Activated CD8-positive, alpha-beta memory T cell treated with anti-CD3 and anti-CD28 coated beads, Interleukin-2, amount 10 ng/mL, durations not matched to agents 7 days and 5 days (primary cell): ENCODE measurements at regions of chr1 and their contacts with region 1.

Region 1: GRCh38 chr1:100459358-100460114 is 78.4 kb upstream of the GPR88 start:
- DNase-seq: peak; percentile 83
- ATAC-seq: peak; percentile 92
- H3K4me3 Mint-ChIP-seq: peak overlapping the region; percentile 37
- H3K27ac Mint-ChIP-seq: peak overlapping the region; percentile 69
- H3K4me1 Mint-ChIP-seq: peaks cover 57% of the 10 kb centered on the region
- H3K27me3 Mint-ChIP-seq: no peaks in the 10 kb centered on the region

Region 2: DNA sequence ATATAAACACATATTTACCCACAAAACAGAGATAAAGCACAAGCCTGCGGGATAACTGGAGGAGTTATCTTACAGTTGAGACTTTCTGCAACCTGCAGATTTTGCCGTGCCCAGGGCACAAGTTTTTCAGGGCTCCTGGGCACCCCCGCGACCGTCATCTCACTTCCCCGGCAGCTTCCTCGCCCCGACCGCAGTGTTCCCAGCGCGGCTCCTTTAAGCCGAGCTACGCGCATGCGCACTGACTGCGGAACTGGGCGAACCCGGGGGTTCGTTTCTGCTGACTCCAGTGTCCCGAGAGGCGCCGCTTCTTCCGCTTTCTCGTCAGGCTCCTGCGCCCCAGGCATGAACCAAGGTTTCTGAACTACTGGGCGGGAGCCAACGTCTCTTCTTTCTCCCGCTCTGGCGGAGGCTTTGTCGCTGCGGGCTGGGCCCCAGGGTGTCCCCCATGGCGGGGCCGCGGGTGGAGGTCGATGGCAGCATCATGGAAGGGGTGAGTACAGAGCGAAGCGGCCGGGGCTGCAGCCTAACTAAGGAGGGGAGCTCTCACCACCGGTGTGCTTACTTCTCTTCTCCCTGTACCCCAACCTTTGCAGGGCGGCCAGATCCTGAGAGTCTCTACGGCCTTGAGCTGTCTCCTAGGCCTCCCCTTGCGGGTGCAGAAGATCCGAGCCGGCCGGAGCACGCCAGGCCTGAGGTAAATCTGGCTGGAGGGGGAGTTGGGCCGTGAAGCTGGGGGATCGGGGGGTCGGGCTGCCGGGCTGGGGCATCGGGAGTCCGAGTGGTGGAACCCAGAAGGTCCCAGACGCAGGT is 193.4 kb before region 1 on chr1 and contains the start of gene RTCA:
- CTCF ChIA-PET with region 1: interaction called, 10 read pairs
- DNase-seq: peak; percentile 97
- ATAC-seq: peak; percentile 93
- H3K4me3 Mint-ChIP-seq: peak within 1 kb of the TSS; percentile 94
- H3K27ac Mint-ChIP-seq: peak within 1 kb of the TSS; percentile 96
- H3K4me1 Mint-ChIP-seq: peaks cover 37% of the 10 kb centered on the region
- H3K27me3 Mint-ChIP-seq: no peaks in the 10 kb centered on the region
- total RNA-seq, gene RTCA: 67.4 to 67.9 TPM

Region 3: GRCh38 chr1:100358210-100358609 is 101.3 kb before region 1 on chr1:
- CTCF ChIA-PET with region 1: interaction called, 18 read pairs
- DNase-seq: no peak
- ATAC-seq: no peak
- H3K4me3 Mint-ChIP-seq: no peak overlapping the region
- H3K27ac Mint-ChIP-seq: peak overlapping the region; percentile 3
- H3K4me1 Mint-ChIP-seq: peaks cover 71% of the 10 kb centered on the region
- H3K27me3 Mint-ChIP-seq: no peaks in the 10 kb centered on the region

Region 4: DNA sequence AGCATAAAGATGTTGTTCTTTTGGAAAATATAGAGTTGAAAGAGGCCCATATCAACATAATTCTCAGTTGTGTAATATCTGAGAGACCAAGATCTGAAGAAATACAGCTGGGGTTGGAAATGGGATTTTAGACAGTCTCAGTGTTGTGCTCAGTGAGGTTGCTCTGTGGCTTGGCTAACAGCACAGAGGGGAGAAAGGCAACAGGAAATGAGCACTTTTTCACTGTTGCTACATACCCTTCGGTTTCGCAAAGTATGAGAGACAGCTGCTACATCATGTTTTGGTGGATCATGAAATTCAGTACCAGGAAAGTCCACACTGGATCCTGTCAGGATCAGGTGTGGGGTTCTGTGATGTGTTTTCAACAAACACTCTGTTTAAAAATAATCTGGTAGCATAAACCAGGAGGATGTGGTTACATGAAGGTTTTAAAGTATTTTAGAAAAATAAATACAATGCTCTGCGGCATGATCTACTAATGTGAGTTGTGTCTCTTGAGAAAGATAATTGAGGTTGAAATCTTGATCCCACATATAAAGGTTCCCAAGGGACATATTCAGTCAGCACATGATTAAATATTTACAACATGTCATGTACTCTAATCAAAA is 71.4 kb after region 1 on chr1:
- CTCF ChIA-PET with region 1: interaction called, 10 read pairs
- DNase-seq: peak; percentile 70
- ATAC-seq: peak; percentile 94
- H3K4me3 Mint-ChIP-seq: peak overlapping the region; percentile 31
- H3K27ac Mint-ChIP-seq: peak overlapping the region; percentile 71
- H3K4me1 Mint-ChIP-seq: peaks cover 44% of the 10 kb centered on the region
- H3K27me3 Mint-ChIP-seq: peaks cover 15% of the 10 kb centered on the region

Region 5: GRCh38 chr1:100604372-100604771 is 144.8 kb after region 1 on chr1:
- CTCF ChIA-PET with region 1: no interaction called
- DNase-seq: no peak
- ATAC-seq: no peak
- H3K4me3 Mint-ChIP-seq: no peak overlapping the region
- H3K27ac Mint-ChIP-seq: no peak overlapping the region
- H3K4me1 Mint-ChIP-seq: no peaks in the 10 kb centered on the region
- H3K27me3 Mint-ChIP-seq: peaks cover 16% of the 10 kb centered on the region

Region 6: DNA sequence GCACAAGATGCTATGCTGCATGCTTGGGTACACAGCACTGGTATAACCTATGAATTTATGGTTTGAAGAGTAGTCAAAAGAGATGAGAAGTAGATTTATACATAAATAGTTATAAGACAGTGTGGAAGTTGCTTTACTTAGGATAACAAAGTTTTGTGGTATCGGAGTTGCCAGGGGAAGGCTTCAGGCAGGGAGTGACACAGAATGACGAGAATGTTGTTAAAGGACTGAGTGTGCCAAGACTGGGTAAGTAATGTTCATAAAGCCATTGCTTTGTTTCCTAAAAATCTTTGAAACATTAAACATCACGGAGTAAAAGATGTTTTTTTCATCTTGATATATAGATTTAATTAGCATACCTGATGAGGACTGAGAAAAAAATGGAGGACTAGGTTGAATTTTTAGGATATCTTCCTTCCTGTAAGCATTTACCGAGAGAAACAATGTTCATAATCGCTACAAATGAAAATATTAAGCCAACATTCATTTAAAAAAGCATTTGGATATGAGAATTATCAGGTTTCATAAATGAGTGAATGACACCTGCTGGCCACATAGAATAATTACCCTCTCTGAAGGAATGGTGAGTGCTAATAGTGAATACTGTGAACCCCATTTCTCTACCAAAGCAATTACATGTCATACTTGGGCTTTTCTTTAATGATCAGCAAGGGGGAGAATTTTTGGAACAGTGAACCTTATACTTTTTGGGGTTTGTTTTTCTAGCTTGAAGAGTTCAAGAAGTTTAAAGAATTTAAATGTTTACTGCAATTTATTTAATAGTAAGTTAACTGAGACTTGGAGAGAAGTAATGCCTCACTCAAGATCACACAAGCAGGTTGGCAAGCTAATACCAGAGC is 406.7 kb after region 1 on chr1:
- CTCF ChIA-PET with region 1: interaction called, 103 read pairs
- DNase-seq: no peak
- ATAC-seq: peak; percentile 63
- H3K4me3 Mint-ChIP-seq: no peak overlapping the region
- H3K27ac Mint-ChIP-seq: no peak overlapping the region
- H3K4me1 Mint-ChIP-seq: peaks cover 3% of the 10 kb centered on the region
- H3K27me3 Mint-ChIP-seq: no peaks in the 10 kb centered on the region